GM10248 (cell line): ENCODE measurements at regions of chr2 and their contacts with region 1.

Region 1: GRCh38 chr2:185274718-185275484 is 463.7 kb upstream of the FSIP2 start:
- DNase-seq: no peak
- CTCF ChIP-seq: no peak

Region 2: DNA sequence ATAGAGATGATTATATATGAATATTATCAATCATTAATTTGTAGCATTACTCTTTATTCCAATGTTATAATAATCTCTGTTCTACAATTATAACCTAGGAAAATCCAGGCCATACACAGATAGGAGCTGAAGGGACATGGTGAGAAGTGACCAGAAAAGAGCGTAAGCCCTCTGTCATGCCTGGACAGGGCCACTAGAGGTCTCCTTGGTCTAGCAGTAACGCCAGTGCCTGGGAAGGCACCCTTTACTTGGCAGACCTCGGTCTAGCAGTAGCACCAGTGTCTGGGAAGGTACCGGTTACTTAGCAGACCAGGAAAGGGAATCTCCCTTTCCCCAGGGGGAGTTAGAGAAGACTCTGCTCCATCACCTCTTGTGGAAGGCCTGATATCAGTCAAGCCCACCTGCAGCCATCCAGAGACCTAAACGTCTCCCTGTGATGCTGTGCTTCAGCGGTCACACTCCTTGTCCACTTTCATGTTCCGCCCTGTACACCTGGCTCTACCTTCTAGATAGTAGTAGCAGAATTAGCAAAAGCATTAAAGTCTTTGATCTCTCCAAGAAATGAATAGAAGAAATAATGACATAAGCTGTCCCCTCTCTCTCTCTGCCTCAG is 16.2 kb after region 1 on chr2:
- CTCF ChIA-PET with region 1: interaction called, 23 read pairs
- POLR2A ChIA-PET with region 1: no interaction called
- DNase-seq: peak; percentile 6
- CTCF ChIP-seq: peak; percentile 53

Region 3: DNA sequence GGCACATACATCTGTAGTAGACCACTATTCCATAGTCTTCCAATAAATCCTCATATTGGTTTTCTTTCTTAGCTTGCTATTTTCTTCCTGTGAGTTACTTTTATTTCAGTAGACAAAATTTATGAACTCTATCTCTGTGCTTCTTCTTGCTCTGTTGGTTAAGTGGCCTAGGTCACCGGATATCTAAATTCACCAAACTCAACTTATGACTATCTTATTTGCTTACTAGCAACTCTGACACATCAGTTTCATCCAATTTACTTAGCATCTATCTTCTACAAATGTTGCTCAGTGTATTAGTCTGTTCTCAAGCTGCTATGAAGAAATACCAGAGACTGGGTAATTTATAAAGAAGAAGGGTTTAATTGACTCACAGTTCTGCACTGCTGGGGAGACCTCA is 31.2 kb after region 1 on chr2:
- CTCF ChIA-PET with region 1: no interaction called
- POLR2A ChIA-PET with region 1: no interaction called
- DNase-seq: no peak
- CTCF ChIP-seq: no peak

Region 4: GRCh38 chr2:185360776-185361175 is 85.9 kb after region 1 on chr2:
- CTCF ChIA-PET with region 1: no interaction called
- POLR2A ChIA-PET with region 1: no interaction called
- DNase-seq: no peak
- CTCF ChIP-seq: no peak